Heart left ventricle (tissue), 16 donors: ENCODE measurements at regions of chr20 and their contacts with region 1.

Region 1: DNA sequence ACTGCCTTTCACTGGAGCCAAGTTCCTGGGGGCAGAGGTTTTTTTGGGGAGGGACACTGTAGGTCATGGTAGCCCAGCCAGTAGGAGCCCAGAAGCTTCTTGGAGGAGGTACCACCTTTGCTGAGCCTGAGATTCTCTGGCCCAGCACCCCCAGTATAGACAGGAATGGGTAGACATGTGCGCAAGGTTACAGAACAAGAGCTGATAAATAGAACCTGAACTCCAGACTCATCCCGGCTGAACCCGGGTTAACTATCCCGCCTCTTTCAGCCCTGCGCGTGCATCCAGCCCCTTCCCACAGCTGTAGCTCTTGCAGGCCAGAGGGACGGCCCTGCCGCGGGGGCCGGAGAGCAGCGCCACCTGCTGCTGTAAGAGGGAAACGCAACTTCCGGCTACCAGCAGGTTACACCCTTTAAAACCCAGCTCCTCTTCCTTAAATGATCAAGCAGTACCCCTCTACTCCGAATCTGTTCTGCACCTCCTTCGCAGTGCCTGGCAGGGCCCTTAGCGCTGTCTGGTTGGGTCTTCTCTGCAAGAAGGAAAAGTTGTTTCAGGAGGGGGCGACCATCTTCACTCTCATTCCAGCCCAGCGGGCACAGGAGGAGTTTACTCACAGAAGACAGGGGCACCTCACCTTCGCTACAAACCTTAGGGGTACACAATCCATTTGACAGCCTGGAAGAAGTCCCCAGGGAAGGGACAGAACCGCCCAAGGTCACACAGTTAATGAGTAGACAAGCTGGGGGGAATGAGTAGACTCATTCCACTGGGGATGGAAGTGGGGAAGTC is 7.5 kb downstream of the SRXN1 start:
- DNase-seq: peak; percentile 68 to 89 (median 74)
- ATAC-seq: peak; percentile 63 to 85 (median 77)
- H3K4me3 ChIP-seq: no peak overlapping the region
- H3K27ac ChIP-seq: peak overlapping the region in 9 of 12 donors; percentile 15 to 65 (median 52)
- H3K4me1 ChIP-seq: peaks cover 0 to 40% (median 18%) of the 10 kb centered on the region in 12 donors
- H3K27me3 ChIP-seq: peaks cover 0 to 4% (median 0%) of the 10 kb centered on the region in 9 donors
- CTCF ChIP-seq: peak; percentile 93 to 98 (median 96)
- POLR2A ChIP-seq: no peak

Region 2: DNA sequence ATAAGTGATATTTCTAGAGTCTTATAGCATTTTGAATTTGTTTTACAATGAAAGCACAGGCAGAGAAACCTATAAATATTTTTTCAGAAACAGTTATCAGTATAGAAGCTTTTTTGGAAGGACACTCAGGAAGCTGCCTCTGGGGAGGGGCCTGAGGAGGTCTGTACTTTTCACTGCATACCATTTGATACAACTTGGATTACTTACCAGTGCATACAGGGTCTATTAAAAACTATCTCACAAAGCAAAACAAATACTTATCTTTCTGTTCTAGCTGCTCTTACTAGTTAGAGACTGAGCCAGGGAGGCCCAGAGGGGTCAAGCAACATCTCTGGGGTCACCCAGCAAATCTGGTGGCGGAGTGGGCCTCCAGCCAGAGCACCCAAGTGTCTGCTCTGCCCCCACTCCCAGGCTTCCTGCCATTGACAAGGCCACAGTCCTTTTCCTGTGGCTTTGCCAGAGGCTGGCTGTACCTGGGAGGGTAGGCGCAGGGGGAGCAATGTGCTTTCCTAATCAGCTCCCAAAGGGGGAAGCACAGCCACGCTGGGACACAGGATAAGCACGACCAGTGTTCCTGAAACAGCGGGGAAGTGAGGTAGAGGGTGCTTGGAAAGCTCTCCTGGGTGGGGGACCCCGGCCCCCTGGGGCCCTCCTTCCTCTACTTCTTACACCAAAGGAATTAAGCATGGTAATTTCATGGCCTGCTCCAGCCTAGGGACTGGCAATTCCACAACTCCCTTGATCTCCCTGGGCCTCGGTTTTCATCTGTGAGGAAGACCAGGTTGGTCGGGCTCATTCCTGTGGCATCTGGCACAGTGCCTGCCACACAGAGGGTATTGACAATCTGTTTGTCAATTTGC is 43.2 kb before region 1 on chr20:
- intact Hi-C with region 1: loop called in 3 of 10 experiments (anchors 1 to 5 kb)
- DNase-seq: peak; percentile 82 to 89 (median 84)
- ATAC-seq: peak; percentile 73 to 87 (median 81)
- H3K4me3 ChIP-seq: no peak overlapping the region
- H3K27ac ChIP-seq: peak overlapping the region; percentile 75 to 93 (median 84)
- H3K4me1 ChIP-seq: peaks cover 9 to 81% (median 58%) of the 10 kb centered on the region in 12 donors
- H3K27me3 ChIP-seq: no peaks in the 10 kb centered on the region
- CTCF ChIP-seq: peak in 2 of 12 donors; percentile 6 to 22
- POLR2A ChIP-seq: peak in 1 of 2 donors; percentile 16